ENCODE measurements at regions of chr1 and their contacts with region 1.

Region 1: DNA sequence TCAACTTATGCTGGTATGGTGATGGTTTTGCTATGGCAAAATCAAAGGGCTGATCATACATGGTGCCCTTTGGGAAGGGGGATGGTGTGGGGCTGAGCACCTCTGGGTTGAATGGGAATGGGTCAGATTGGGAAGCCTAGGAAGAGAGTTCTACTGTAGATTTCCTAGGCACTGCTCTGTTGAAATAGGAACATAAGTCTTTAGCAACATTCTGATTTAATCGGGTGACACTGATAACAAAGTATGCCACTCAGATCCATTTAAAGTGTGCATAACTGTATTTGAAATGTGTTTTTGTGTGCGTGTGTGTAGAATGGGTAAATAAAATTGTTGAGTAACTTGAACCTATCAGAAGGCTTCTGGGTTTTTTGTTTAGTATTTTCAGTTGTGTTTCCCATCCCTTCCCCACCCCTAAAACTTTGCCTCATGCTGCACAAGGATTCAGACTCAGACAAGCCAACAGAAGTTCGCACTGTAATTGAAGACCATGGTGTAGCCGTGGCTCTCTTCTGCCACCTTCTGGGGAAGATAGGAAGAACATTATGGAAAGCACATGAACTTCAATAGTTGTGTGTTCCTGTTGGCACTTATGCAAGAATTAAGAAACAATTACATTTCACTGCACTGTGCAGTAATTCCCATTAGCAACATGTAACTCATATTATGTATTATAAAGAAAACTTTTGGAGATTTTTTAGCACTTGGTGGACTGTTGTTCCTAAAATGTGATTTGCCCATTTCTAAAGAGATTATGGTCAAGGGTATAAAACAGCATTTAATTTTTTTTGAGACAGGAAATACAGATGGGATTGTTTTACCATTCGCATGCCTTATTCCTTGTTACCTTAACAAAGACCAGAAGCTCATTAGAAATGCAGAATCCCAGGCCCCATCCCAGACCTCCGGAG is 10.9 kb upstream of the C4BPB start:
- DNase-seq: peak; percentile 85
- H3K4me3 ChIP-seq: no peak overlapping the region
- H3K27ac ChIP-seq: no peak overlapping the region
- H3K4me1 ChIP-seq: no peaks in the 10 kb centered on the region
- H3K27me3 ChIP-seq: peaks cover 2 to 5% of the 10 kb centered on the region in 2 experiments
- CTCF ChIP-seq: peak; percentile 69 to 75
- POLR2A ChIP-seq: no peak

Region 2: GRCh38 chr1:206935491-206936067 is 142.1 kb before region 1 on chr1:
- CTCF ChIA-PET with region 1: interaction called, 7 read pairs
- POLR2A ChIA-PET with region 1: no interaction called
- dilution Hi-C with region 1: no loop called
- intact Hi-C with region 1: loop called (anchors 1 kb)
- DNase-seq: peak; percentile 25
- H3K4me3 ChIP-seq: no peak overlapping the region
- H3K27ac ChIP-seq: no peak overlapping the region
- H3K4me1 ChIP-seq: no peaks in the 10 kb centered on the region
- H3K27me3 ChIP-seq: no peaks in the 10 kb centered on the region
- CTCF ChIP-seq: peak; percentile 68 to 89
- POLR2A ChIP-seq: no peak

Region 3: DNA sequence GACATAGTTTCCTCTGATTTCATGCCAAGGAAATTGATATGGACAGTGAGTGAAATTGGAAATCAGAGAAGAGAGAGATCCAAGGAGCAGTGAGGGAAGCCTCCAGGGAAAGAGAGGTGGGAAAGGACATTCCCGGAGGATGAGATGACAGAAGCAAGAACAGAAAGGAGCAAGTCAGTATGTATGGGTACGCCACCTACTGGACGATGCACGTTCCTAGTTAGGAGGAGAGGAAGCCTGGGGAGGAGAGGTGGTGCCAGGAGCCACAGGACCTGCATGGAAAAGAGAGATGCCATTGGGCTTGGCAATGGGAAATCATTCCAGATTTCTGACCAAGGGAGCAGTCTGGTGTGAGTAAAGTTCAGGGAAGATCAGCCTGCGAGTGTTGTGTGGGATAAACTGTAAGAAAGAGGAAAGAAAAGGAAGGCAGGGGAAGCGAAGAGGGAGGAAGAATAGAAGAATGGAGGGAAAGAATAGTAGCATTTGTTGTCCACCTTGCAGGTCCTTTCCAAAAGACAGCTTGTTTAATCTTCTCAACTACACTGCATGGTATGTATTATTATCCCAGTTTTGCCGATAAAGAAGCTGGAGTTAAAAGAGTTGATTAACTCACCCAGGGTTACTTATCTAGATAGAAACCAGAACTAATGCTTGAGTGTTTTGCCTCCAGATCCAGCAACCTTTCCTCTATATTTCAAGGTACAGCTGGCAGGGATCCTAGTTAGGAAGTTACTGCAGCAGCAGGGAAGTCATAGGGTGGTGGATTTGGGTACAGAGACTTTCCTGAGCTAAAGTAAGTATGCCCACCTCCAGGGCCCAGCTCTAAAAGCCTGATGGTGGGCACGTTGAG is 72.5 kb before region 1 on chr1:
- CTCF ChIA-PET with region 1: interaction called, 3 read pairs
- POLR2A ChIA-PET with region 1: no interaction called
- dilution Hi-C with region 1: no loop called
- intact Hi-C with region 1: loop called (anchors 1 kb)
- DNase-seq: peak; percentile 33
- H3K4me3 ChIP-seq: no peak overlapping the region
- H3K27ac ChIP-seq: no peak overlapping the region
- H3K4me1 ChIP-seq: no peaks in the 10 kb centered on the region
- H3K27me3 ChIP-seq: peaks cover 0 to 3% of the 10 kb centered on the region in 2 experiments
- CTCF ChIP-seq: peak; percentile 83 to 86
- POLR2A ChIP-seq: no peak

Region 4: DNA sequence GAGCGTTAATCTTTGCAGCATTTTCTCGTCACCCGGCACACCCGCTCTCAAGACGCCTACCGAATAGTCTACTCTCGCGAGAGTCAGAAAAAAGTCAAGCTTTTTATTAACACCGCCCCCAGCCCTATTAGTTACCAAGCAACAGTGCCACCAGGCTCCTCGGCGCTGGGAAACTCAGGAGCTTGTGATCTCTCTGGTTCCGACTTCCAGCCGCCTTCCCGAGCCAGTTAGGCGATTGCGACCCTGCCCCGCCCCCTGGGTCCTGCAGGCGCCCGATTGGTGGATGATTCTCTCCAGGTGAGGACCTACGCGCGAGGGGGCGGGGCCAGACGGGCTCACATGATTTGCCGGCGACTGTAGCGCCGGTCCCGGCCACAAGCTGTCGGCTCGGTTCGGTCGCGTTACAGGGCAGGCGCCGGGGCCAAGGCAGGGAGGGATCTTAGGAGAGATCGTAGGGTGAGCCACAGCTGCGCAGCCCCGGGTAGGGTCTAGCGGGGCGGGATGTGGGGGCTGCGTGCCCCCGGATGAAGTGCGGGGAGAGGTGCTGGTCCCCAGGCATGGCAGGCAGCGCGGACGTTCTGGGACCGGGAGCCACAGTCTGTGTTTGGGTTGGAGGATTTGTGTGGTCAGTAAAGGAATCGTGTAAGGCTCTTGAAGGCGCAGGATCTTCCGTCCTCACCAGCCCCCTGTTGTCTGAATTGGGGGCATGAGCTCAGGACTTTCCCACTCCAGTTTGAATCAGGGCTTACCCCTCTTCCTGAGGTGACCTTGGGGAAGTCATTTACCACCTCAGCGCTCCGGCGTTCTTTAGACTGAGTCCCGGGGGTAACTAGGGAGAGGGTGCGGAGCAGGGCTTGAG is 24.6 kb before region 1 on chr1 and contains the start of gene PFKFB2:
- CTCF ChIA-PET with region 1: interaction called, 3 read pairs
- POLR2A ChIA-PET with region 1: no interaction called
- dilution Hi-C with region 1: no loop called
- intact Hi-C with region 1: loop called (anchors 1 kb)
- DNase-seq: peak; percentile 88
- H3K4me3 ChIP-seq: peak within 1 kb of the TSS; percentile 27 to 77 (median 62)
- H3K27ac ChIP-seq: no peak within 1 kb of the TSS
- H3K4me1 ChIP-seq: peaks cover 15% of the 10 kb centered on the region
- H3K27me3 ChIP-seq: peaks cover 0 to 2% of the 10 kb centered on the region in 2 experiments
- CTCF ChIP-seq: no peak
- POLR2A ChIP-seq: no peak
- total RNA-seq, gene PFKFB2: 1.8 and 2.0 TPM in 2 replicates

Region 5: GRCh38 chr1:207134581-207134980 is 56.9 kb after region 1 on chr1:
- CTCF ChIA-PET with region 1: no interaction called
- POLR2A ChIA-PET with region 1: no interaction called
- dilution Hi-C with region 1: no loop called
- intact Hi-C with region 1: no loop called
- DNase-seq: no peak
- H3K4me3 ChIP-seq: no peak overlapping the region
- H3K27ac ChIP-seq: no peak overlapping the region
- H3K4me1 ChIP-seq: no peaks in the 10 kb centered on the region
- H3K27me3 ChIP-seq: no peaks in the 10 kb centered on the region
- CTCF ChIP-seq: no peak
- POLR2A ChIP-seq: no peak

Measured in endothelial cell of umbilical vein (primary cell).